B cell (primary cell): ENCODE measurements at regions of chr2 and their contacts with region 1.

Region 1: DNA sequence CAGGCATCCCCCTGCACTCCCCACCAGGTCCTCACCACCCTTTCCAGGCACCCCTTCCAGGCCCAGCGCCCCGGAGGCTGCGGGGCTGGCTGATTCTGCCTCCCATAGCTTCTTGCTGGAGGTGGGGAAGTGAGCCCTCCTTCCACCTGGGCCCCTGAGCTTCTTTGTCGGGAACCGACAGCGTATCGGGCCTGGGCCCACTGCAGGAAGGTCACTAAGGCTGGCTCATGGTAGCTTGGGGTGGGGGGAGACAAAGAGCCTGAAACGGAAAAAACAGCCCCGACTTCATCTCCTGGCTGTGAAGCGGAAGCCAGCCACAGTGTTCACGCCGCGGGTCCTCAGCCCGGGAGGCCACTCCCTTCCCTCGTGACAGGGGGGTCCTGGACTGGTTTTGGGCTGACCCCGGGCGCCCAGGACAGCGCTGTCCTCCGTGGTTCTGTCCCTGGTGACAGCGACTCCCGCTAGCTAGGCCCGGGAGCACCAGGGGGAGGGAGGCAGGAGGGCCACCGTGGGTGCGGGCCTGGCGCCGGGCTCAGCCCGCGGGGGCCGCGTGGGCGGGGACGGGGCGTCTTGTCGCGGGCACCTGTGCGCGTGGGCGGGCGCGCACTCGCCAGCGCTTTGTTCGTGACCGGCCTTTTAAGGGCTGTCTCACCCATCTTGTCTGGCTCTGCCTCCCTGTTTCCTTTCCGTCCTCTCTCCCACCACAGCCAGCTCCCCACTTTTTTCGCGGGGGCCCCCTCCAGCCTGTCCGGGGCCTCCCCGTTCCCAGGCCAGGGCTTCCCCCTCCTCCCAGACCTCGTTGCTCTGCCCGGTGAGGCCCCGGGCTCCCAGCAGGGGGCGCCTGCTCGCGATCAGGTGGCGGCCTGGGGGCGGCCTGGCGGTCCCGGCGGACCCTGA is 64.9 kb downstream of the DNMT3A start:
- DNase-seq: peak; percentile 89
- ATAC-seq: peak; percentile 35
- H3K4me3 ChIP-seq: peak overlapping the region in 4 of 5 experiments; percentile 46 to 60 (median 56)
- H3K4me3 Mint-ChIP-seq: peak overlapping the region; percentile 79
- H3K27ac ChIP-seq: peak overlapping the region; percentile 94 to 96
- H3K27ac Mint-ChIP-seq: peak overlapping the region; percentile 94
- H3K4me1 ChIP-seq: peaks cover 79 to 92% of the 10 kb centered on the region in 2 donors
- H3K4me1 Mint-ChIP-seq: peaks cover 78% of the 10 kb centered on the region
- H3K27me3 ChIP-seq: no peaks in the 10 kb centered on the region
- H3K27me3 Mint-ChIP-seq: no peaks in the 10 kb centered on the region
- CTCF ChIP-seq: peak; percentile 83

Region 2: GRCh38 chr2:25252281-25253105 is 24.3 kb before region 1 on chr2:
- CTCF ChIA-PET with region 1: interaction called, 7 read pairs
- POLR2A ChIA-PET with region 1: interaction called, 10 read pairs
- intact Hi-C with region 1: loop called (anchors 1 kb)
- DNase-seq: peak; percentile 66
- ATAC-seq: peak; percentile 76
- H3K4me3 ChIP-seq: peak overlapping the region in 4 of 5 experiments; percentile 69 to 91 (median 76)
- H3K4me3 Mint-ChIP-seq: peak overlapping the region; percentile 88
- H3K27ac ChIP-seq: peak overlapping the region; percentile 12 to 74
- H3K27ac Mint-ChIP-seq: peak overlapping the region; percentile 46
- H3K4me1 ChIP-seq: peaks cover 9 to 26% of the 10 kb centered on the region in 2 donors
- H3K4me1 Mint-ChIP-seq: peaks cover 21% of the 10 kb centered on the region
- H3K27me3 ChIP-seq: no peaks in the 10 kb centered on the region
- H3K27me3 Mint-ChIP-seq: no peaks in the 10 kb centered on the region
- CTCF ChIP-seq: no peak

Region 3: GRCh38 chr2:25301453-25302352 is 24.9 kb after region 1 on chr2:
- CTCF ChIA-PET with region 1: interaction called, 28 read pairs
- POLR2A ChIA-PET with region 1: interaction called, 8 read pairs
- intact Hi-C with region 1: loop called (anchors 1 kb)
- DNase-seq: peak; percentile 66
- ATAC-seq: peak; percentile 92
- H3K4me3 ChIP-seq: no peak overlapping the region
- H3K4me3 Mint-ChIP-seq: peak overlapping the region; percentile 58
- H3K27ac ChIP-seq: no peak overlapping the region
- H3K27ac Mint-ChIP-seq: peak overlapping the region; percentile 23
- H3K4me1 ChIP-seq: peaks cover 28 to 34% of the 10 kb centered on the region in 2 donors
- H3K4me1 Mint-ChIP-seq: peaks cover 33% of the 10 kb centered on the region
- H3K27me3 ChIP-seq: no peaks in the 10 kb centered on the region
- H3K27me3 Mint-ChIP-seq: no peaks in the 10 kb centered on the region
- CTCF ChIP-seq: no peak

Region 4: DNA sequence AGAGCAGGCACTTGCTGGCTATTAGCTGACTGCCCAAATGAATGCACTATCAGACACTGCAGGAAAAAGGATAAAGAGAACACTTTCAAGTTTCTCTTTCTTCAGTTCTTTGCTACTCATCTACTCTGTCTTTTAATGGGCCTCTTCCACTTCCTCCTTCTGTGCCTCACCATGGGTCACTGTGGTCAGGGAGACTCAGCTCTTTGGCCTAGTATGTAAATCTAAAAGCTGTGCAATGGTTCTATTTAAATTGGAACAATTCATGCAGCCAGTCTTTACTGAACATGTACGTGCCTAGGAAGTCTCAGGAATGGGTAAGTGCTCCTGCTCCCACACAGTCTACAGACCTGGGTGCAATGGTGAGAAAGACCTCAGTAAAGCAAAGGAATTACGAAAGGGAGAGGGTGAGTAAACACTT is 144.0 kb after region 1 on chr2:
- CTCF ChIA-PET with region 1: interaction called, 3 read pairs
- POLR2A ChIA-PET with region 1: interaction called, 3 read pairs
- intact Hi-C with region 1: loop called (anchors 5 kb)
- DNase-seq: peak; percentile 60
- ATAC-seq: peak; percentile 42
- H3K4me3 ChIP-seq: peak overlapping the region in 4 of 5 experiments; percentile 19 to 57 (median 34)
- H3K4me3 Mint-ChIP-seq: peak overlapping the region; percentile 84
- H3K27ac ChIP-seq: peak overlapping the region; percentile 89 to 94
- H3K27ac Mint-ChIP-seq: peak overlapping the region; percentile 96
- H3K4me1 ChIP-seq: peaks cover 79 to 86% of the 10 kb centered on the region in 2 donors
- H3K4me1 Mint-ChIP-seq: peaks cover 85% of the 10 kb centered on the region
- H3K27me3 ChIP-seq: no peaks in the 10 kb centered on the region
- H3K27me3 Mint-ChIP-seq: no peaks in the 10 kb centered on the region
- CTCF ChIP-seq: no peak

Region 5: DNA sequence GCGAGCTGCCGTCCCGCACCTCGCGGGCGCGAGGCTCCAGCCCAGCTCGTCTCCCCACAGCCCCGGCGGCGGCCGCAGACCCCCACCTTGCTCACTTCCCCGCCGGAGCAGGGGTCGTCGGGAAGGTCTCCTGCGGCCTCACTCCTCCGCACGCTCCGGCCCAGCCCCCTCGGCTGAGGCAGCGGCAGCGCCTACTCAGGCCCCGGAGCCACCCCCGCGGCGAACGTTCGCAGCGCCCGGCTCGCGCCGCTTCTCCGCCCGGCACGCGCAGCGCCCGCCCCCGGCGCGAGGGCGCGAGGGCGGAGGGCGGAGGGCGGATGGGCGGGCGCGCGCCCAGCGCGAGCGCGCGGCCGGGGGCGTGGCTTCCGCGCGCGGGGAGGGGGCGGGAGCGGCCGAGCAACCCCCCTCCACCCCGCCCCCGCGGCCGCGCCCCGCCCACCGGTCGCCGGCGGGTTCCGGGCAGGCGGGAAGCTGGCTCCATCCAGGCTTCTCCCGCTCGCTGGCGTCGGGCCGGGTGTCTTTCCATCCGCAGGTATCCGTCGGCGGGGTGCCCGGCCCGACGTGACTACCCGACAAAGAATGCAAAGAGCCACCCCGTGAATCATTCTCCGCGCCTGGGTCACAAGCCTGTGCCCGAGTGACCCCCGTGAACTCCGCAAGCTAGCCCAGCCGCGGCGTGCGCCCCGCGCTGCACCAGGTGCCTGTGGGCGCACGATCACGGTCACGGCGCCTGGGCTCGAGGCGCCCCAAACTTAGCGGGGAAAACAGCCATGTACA is 396.7 kb after region 1 on chr2 and contains the start of gene DTNB:
- CTCF ChIA-PET with region 1: no interaction called
- POLR2A ChIA-PET with region 1: no interaction called
- intact Hi-C with region 1: loop called (anchors 5 kb)
- DNase-seq: peak; percentile 89
- ATAC-seq: peak; percentile 74
- H3K4me3 ChIP-seq: peak within 1 kb of the TSS; percentile 75 to 85 (median 82)
- H3K4me3 Mint-ChIP-seq: peak within 1 kb of the TSS; percentile 94
- H3K27ac ChIP-seq: peak within 1 kb of the TSS; percentile 59 to 71
- H3K27ac Mint-ChIP-seq: peak within 1 kb of the TSS; percentile 91
- H3K4me1 ChIP-seq: peaks cover 8 to 16% of the 10 kb centered on the region in 2 donors
- H3K4me1 Mint-ChIP-seq: peaks cover 16% of the 10 kb centered on the region
- H3K27me3 ChIP-seq: peaks cover 0 to 2% (median 0%) of the 10 kb centered on the region in 4 experiments
- H3K27me3 Mint-ChIP-seq: no peaks in the 10 kb centered on the region
- CTCF ChIP-seq: no peak
- total RNA-seq, gene DTNB: 37.3 and 45.8 TPM in 2 replicates